H1 (cell line): ENCODE measurements at regions of chr6 and their contacts with region 1.

Region 1: GRCh38 chr6:116969211-116969863 is 92.3 kb downstream of the RFX6 start:
- DNase-seq: no peak
- H3K4me3 ChIP-seq: no peak overlapping the region
- H3K27ac ChIP-seq: no peak overlapping the region
- H3K4me1 ChIP-seq: no peaks in the 10 kb centered on the region
- H3K27me3 ChIP-seq: no peaks in the 10 kb centered on the region
- CTCF ChIP-seq: peak in 2 of 3 experiments; percentile 64 to 73; a peak in 3 of 4 replicates
- EP300 ChIP-seq: no peak
- POLR2A ChIP-seq: no peak
- RAD21 ChIP-seq: peak; percentile 65 to 75

Region 2: DNA sequence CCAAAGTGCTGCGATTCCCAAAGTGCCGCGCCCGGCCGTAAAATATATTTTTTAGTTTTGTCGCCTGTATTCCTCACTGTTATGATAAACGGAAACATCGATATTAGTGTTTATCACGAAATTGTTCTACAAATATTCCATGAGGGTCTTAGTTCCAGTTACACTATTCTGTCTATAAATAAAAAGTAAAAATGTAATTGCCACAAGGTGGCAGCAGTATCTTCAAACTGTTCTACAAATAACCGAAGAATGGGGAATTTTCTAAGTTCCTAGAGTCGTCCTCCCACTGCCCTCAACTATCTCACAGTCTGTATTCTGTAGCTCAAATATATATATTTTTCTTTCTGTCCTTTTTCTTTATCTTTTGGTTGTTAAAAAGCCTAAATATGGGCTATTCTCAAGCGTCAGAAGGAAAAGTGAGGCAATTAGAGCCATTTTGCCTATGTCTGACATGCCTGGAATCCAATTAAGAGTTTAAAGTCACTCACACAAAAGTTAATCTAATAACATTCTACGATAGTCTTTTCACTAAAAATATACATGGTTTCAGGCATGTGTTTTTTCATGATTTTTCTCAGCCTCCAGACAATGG is 189.7 kb before region 1 on chr6:
- CTCF ChIA-PET with region 1: interaction called, 14 read pairs
- POLR2A ChIA-PET with region 1: no interaction called
- DNase-seq: peak in 1 of 2 experiments; percentile 47
- H3K4me3 ChIP-seq: no peak overlapping the region
- H3K27ac ChIP-seq: no peak overlapping the region
- H3K4me1 ChIP-seq: no peaks in the 10 kb centered on the region
- H3K27me3 ChIP-seq: no peaks in the 10 kb centered on the region
- CTCF ChIP-seq: peak in 2 of 3 experiments; percentile 38 to 44; a peak in 2 of 4 replicates
- EP300 ChIP-seq: no peak
- POLR2A ChIP-seq: no peak
- RAD21 ChIP-seq: peak; percentile 66 to 69

Region 3: DNA sequence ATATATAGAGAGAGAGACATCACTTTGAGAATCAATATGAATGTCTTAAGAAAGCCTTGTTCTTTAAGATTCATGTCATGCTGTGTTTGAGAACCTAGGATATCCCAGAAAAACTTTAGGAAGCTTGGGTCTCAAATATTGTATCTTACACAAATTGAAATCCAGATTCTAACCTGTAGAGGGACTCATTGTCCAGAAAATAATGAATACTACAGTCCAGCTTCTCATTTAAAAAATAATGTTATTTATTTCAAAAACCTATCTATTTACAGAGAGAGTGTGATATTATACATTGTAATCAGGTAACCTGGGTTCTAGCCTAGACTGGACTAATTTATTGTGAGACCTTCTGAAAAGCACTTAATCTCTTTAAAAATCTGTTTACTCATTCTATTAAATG is 88.1 kb before region 1 on chr6:
- CTCF ChIA-PET with region 1: interaction called, 12 read pairs
- POLR2A ChIA-PET with region 1: no interaction called
- DNase-seq: no peak
- H3K4me3 ChIP-seq: no peak overlapping the region
- H3K27ac ChIP-seq: no peak overlapping the region
- H3K4me1 ChIP-seq: peaks cover 0 to 3% (median 0%) of the 10 kb centered on the region in 4 experiments; a peak in 1 of 7 replicates
- H3K27me3 ChIP-seq: peaks cover 6 to 21% (median 15%) of the 10 kb centered on the region in 4 experiments
- CTCF ChIP-seq: no peak; a peak in 1 of 4 replicates
- EP300 ChIP-seq: no peak
- POLR2A ChIP-seq: no peak
- RAD21 ChIP-seq: peak in 1 of 2 experiments; percentile 19; a peak in 1 of 4 replicates

Region 4: DNA sequence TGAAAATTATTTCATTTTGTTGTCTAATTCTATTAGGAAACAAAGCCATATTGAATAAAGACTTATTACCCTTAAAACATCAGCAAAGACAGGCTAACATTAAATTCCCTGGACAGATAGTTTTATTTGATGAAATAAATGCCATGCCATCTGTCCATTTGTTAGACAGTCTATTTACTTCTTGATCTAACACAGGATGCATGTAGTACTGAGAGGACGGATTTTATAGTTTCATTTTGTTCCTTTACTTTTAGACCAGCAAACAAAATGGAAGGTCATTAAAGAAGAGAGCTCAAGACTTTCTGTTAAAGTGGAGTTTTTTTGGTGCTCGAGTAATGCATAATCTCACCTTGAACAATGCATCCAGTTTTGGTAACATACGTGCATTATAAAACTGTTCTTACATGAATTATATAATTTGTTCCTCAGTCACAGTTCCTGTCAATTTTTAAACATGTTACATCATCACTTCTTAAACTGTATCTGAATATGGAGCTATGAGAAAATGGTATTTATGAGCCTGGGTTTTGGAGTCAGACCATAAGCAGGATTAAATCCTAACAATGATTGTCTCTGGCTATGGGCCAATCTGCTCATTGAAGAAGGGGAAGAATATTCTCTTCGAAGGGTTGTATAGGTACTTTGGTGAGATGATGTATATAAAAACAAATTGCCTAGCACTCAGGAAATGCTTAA is 46.3 kb before region 1 on chr6:
- CTCF ChIA-PET with region 1: interaction called, 11 read pairs
- POLR2A ChIA-PET with region 1: no interaction called
- DNase-seq: no peak
- H3K4me3 ChIP-seq: no peak overlapping the region
- H3K27ac ChIP-seq: no peak overlapping the region
- H3K4me1 ChIP-seq: no peaks in the 10 kb centered on the region
- H3K27me3 ChIP-seq: no peaks in the 10 kb centered on the region
- CTCF ChIP-seq: no peak
- EP300 ChIP-seq: no peak
- POLR2A ChIP-seq: no peak
- RAD21 ChIP-seq: no peak

Region 5: GRCh38 chr6:116954938-116955337 is 14.4 kb before region 1 on chr6:
- CTCF ChIA-PET with region 1: interaction called, 15 read pairs
- POLR2A ChIA-PET with region 1: no interaction called
- DNase-seq: no peak
- H3K4me3 ChIP-seq: no peak overlapping the region
- H3K27ac ChIP-seq: no peak overlapping the region
- H3K4me1 ChIP-seq: no peaks in the 10 kb centered on the region; a peak in 1 of 7 replicates
- H3K27me3 ChIP-seq: no peaks in the 10 kb centered on the region
- CTCF ChIP-seq: no peak
- EP300 ChIP-seq: no peak
- POLR2A ChIP-seq: no peak
- RAD21 ChIP-seq: no peak

Region 6: DNA sequence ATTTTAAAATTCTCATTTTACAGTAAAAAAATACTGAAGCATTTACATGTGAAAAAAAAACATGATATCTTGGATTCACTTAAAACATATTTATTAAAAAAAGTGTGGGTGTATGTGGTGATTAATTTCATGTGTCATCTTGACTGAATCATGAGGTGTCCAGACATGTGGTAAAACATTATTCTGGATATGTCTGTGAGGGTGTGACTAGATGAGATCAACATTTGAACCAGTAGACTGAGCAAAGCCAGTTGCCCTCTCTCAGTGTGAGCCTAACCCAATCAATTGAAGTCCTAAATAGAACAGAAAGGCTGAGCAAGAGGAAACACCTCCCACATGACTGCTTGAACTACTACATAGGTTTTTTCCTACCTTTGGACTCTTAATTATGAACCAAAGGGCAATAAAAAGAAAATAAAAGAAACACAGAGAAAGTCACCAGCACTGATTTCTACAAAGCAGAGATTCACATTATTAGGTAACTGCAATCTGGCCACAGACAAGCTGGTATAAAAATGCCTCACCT is 205.6 kb after region 1 on chr6:
- CTCF ChIA-PET with region 1: no interaction called
- POLR2A ChIA-PET with region 1: no interaction called
- DNase-seq: no peak
- H3K4me3 ChIP-seq: no peak overlapping the region
- H3K27ac ChIP-seq: no peak overlapping the region
- H3K4me1 ChIP-seq: no peaks in the 10 kb centered on the region
- H3K27me3 ChIP-seq: no peaks in the 10 kb centered on the region
- CTCF ChIP-seq: no peak
- EP300 ChIP-seq: no peak
- POLR2A ChIP-seq: no peak
- RAD21 ChIP-seq: no peak